H1 (cell line): ENCODE measurements at regions of chr18 and their contacts with region 1.

Region 1: GRCh38 chr18:46369323-46369722 is 265.1 kb downstream of the HAUS1 start:
- DNase-seq: no peak
- H3K4me3 ChIP-seq: no peak overlapping the region
- H3K27ac ChIP-seq: no peak overlapping the region
- H3K4me1 ChIP-seq: peaks cover 0 to 9% (median 0%) of the 10 kb centered on the region in 4 experiments; a peak in 1 of 7 replicates
- H3K27me3 ChIP-seq: no peaks in the 10 kb centered on the region
- CTCF ChIP-seq: peak; percentile 48 to 79 (median 68)
- EP300 ChIP-seq: no peak
- POLR2A ChIP-seq: no peak
- RAD21 ChIP-seq: peak; percentile 60 to 67

Region 2: DNA sequence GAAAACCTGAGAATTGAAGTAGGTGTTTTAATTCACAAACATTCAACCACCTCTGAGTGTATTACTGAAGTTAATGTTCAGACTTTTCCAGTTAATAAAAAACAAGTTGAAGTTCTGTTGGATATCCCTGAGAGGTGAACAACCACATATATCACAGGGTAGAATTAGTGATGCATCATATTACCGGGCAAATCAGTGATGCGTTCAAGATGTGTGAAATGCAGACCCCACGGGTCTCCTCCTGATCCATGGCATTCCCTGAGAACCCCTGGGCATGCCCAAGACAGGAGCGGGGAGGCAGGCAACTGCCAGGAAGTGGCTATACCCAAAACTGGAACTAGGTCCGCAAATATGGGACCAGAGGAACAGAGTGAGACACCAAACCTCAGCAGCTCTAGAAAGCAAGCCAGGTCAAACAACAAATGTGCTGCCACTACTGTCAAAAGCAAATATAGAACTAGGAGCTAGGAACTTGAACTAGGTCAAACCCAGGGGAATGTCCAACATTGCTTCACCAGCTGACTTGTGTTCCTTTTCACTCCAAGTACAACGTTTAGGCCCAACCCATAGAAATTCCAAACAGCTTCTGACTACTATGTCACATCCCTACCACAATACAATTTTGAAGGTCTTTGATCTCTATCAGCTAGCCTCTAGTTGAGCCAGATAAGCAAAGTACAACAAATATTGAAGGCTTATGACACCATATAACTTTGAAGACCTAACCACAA is 317.4 kb before region 1 on chr18:
- CTCF ChIA-PET with region 1: no interaction called
- POLR2A ChIA-PET with region 1: no interaction called
- DNase-seq: peak in 1 of 2 experiments; percentile 37
- H3K4me3 ChIP-seq: no peak overlapping the region
- H3K27ac ChIP-seq: no peak overlapping the region
- H3K4me1 ChIP-seq: no peaks in the 10 kb centered on the region
- H3K27me3 ChIP-seq: no peaks in the 10 kb centered on the region
- CTCF ChIP-seq: no peak
- EP300 ChIP-seq: no peak
- POLR2A ChIP-seq: no peak
- RAD21 ChIP-seq: no peak

Region 3: DNA sequence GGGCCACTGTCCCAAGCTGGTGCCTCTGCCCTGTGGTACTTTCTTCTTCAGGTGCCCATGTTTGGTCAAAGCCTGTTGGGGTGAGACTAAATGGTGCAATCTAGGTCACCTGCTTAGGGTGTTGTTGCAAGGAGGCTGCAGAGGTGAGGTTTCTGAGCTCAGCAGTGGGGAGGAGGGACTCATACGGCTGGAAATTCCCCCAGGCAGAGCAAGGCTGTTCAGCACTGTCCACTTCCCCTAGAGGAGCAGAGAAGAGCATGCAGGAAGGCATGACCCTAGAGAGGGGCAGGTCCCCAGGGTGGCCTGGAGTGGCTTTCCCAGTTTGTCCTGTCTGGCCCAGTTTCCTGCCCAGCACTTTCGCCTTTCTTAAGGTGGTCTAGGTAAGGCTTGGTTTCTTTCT is 54.1 kb before region 1 on chr18:
- CTCF ChIA-PET with region 1: interaction called, 10 read pairs
- POLR2A ChIA-PET with region 1: no interaction called
- DNase-seq: no peak
- H3K4me3 ChIP-seq: no peak overlapping the region
- H3K27ac ChIP-seq: no peak overlapping the region
- H3K4me1 ChIP-seq: peaks cover 0 to 8% (median 0%) of the 10 kb centered on the region in 4 experiments; a peak in 2 of 7 replicates
- H3K27me3 ChIP-seq: no peaks in the 10 kb centered on the region; a peak in 1 of 7 replicates
- CTCF ChIP-seq: no peak
- EP300 ChIP-seq: no peak
- POLR2A ChIP-seq: no peak
- RAD21 ChIP-seq: no peak

Region 4: GRCh38 chr18:46343931-46344372 is 25.4 kb before region 1 on chr18:
- CTCF ChIA-PET with region 1: interaction called, 26 read pairs
- POLR2A ChIA-PET with region 1: interaction called, 3 read pairs
- DNase-seq: peak in 1 of 2 experiments; percentile 61
- H3K4me3 ChIP-seq: no peak overlapping the region
- H3K27ac ChIP-seq: no peak overlapping the region
- H3K4me1 ChIP-seq: peaks cover 5 to 20% (median 13%) of the 10 kb centered on the region in 4 experiments
- H3K27me3 ChIP-seq: no peaks in the 10 kb centered on the region
- CTCF ChIP-seq: peak; percentile 17 to 35 (median 18); a peak in 3 of 4 replicates
- EP300 ChIP-seq: no peak
- POLR2A ChIP-seq: no peak
- RAD21 ChIP-seq: peak in 1 of 2 experiments; percentile 13; a peak in 1 of 4 replicates

Region 5: GRCh38 chr18:46356278-46357033 is 12.9 kb before region 1 on chr18:
- CTCF ChIA-PET with region 1: interaction called, 23 read pairs
- POLR2A ChIA-PET with region 1: interaction called, 3 read pairs
- DNase-seq: no peak
- H3K4me3 ChIP-seq: no peak overlapping the region
- H3K27ac ChIP-seq: no peak overlapping the region
- H3K4me1 ChIP-seq: peaks cover 0 to 4% (median 1%) of the 10 kb centered on the region in 4 experiments; a peak in 5 of 7 replicates
- H3K27me3 ChIP-seq: no peaks in the 10 kb centered on the region
- CTCF ChIP-seq: no peak
- EP300 ChIP-seq: no peak
- POLR2A ChIP-seq: no peak
- RAD21 ChIP-seq: no peak

Region 6: GRCh38 chr18:46386788-46387187 is 17.5 kb after region 1 on chr18:
- CTCF ChIA-PET with region 1: interaction called, 42 read pairs
- POLR2A ChIA-PET with region 1: interaction called, 4 read pairs
- DNase-seq: no peak
- H3K4me3 ChIP-seq: no peak overlapping the region
- H3K27ac ChIP-seq: no peak overlapping the region
- H3K4me1 ChIP-seq: no peaks in the 10 kb centered on the region
- H3K27me3 ChIP-seq: no peaks in the 10 kb centered on the region
- CTCF ChIP-seq: no peak
- EP300 ChIP-seq: no peak
- POLR2A ChIP-seq: no peak
- RAD21 ChIP-seq: no peak

Region 7: GRCh38 chr18:46402396-46402795 is 33.1 kb after region 1 on chr18:
- CTCF ChIA-PET with region 1: no interaction called
- POLR2A ChIA-PET with region 1: no interaction called
- DNase-seq: no peak
- H3K4me3 ChIP-seq: no peak overlapping the region
- H3K27ac ChIP-seq: no peak overlapping the region
- H3K4me1 ChIP-seq: no peaks in the 10 kb centered on the region; a peak in 1 of 7 replicates
- H3K27me3 ChIP-seq: no peaks in the 10 kb centered on the region; a peak in 1 of 7 replicates
- CTCF ChIP-seq: no peak
- EP300 ChIP-seq: no peak
- POLR2A ChIP-seq: no peak
- RAD21 ChIP-seq: no peak

Region 8: GRCh38 chr18:46632401-46633071 is 263.2 kb after region 1 on chr18:
- CTCF ChIA-PET with region 1: no interaction called
- POLR2A ChIA-PET with region 1: no interaction called
- DNase-seq: peak in 1 of 2 experiments; percentile 23
- H3K4me3 ChIP-seq: no peak overlapping the region
- H3K27ac ChIP-seq: no peak overlapping the region
- H3K4me1 ChIP-seq: no peaks in the 10 kb centered on the region
- H3K27me3 ChIP-seq: no peaks in the 10 kb centered on the region
- CTCF ChIP-seq: no peak
- EP300 ChIP-seq: no peak
- POLR2A ChIP-seq: no peak
- RAD21 ChIP-seq: no peak